Ascending aorta (tissue), 2 donors: ENCODE measurements at regions of chr6 and their contacts with region 1.

Region 1: DNA sequence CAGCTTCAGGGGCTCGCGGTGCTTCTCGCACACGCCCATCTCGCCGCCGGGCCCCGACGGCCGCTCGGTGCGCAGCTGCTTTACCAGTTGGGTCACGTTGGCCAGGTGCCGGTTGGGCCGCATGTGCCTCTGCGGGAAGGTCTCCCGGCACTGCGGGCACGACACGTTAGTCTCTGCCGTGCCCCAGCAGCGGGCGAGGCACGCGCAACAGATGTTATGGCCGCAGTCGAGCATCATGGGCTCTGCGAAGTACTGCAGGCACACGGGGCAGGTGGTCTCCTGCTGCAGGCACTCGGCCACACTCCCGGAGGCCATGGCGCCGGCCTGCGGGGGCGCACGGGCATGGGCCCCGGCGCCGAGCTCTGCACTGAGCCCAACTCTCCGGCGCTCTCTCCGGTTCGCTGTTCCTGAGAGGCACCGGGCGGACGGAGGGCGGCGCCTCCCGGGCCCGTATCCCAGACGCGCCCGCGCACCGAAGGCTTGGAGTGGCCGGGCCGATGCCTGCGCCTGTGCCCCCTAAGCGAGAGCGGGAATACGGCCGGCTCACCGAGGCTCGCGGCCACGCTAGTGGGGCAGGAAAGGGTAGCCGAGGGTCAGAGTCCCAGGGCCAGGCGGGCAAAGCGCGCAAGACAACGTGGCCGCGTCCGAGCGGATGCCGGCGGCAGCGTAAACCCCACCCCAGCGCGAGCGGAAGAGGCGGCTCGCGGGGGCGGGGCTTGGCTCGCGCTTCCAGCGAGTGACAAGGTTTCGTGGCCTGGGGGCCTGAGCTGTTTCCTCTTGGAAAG is at the start of gene TRIM27:
- DNase-seq: peak; percentile 50 to 91
- H3K4me3 ChIP-seq: peak within 1 kb of the TSS; percentile 82 to 97
- H3K27ac ChIP-seq: peak within 1 kb of the TSS; percentile 91 to 98
- H3K4me1 ChIP-seq: peaks cover 6 to 16% of the 10 kb centered on the region in 2 donors
- H3K27me3 ChIP-seq: no peaks in the 10 kb centered on the region
- CTCF ChIP-seq: peak in 1 of 3 experiments; percentile 23
- total RNA-seq, gene TRIM27: 167 TPM

Region 2: GRCh38 chr6:28758046-28758817 is 165.3 kb before region 1 on chr6:
- intact Hi-C with region 1: no loop called
- DNase-seq: no peak
- H3K4me3 ChIP-seq: no peak overlapping the region
- H3K27ac ChIP-seq: no peak overlapping the region
- H3K4me1 ChIP-seq: no peaks in the 10 kb centered on the region
- H3K27me3 ChIP-seq: no peaks in the 10 kb centered on the region
- CTCF ChIP-seq: no peak

Region 3: DNA sequence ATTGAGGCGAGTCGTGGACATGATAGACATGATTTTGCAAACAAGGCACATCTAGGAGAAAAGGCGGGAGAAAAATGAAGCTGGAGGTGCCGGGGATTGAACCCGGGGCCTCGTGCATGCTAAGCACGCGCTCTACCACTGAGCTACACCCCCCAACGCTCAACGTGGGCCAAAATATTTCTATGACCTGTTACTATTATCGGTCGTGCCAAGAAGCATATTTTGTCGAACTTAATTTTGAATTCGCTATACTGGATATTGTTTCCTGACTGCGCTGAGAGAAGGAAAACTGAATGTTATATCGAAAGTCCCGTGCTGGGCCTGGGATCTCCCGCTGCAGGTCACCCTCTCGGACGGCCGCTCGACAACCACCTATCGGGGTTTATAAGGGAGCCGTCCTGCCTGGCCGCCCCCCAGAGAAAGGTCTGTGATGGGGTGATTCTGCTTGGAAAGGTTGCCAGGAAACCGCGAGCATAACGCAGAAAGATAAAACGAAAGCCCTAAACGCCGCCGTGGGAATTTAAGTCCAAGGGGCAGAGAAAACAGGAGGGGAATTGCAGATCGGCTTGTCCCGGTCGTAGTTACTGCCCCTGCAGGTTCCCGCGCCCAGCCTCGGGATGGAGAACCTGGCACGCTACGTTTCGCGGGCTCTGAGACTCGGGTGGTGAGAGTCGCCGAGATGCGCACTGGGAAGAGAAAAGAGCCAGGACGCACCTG is 59.7 kb before region 1 on chr6:
- intact Hi-C with region 1: loop called (anchors 1 kb)
- DNase-seq: peak in 1 of 2 donors; percentile 86
- H3K4me3 ChIP-seq: peak overlapping the region; percentile 66 to 81
- H3K27ac ChIP-seq: peak overlapping the region; percentile 59 to 78
- H3K4me1 ChIP-seq: peaks cover 0 to 3% of the 10 kb centered on the region in 2 donors
- H3K27me3 ChIP-seq: no peaks in the 10 kb centered on the region
- CTCF ChIP-seq: no peak

Region 4: DNA sequence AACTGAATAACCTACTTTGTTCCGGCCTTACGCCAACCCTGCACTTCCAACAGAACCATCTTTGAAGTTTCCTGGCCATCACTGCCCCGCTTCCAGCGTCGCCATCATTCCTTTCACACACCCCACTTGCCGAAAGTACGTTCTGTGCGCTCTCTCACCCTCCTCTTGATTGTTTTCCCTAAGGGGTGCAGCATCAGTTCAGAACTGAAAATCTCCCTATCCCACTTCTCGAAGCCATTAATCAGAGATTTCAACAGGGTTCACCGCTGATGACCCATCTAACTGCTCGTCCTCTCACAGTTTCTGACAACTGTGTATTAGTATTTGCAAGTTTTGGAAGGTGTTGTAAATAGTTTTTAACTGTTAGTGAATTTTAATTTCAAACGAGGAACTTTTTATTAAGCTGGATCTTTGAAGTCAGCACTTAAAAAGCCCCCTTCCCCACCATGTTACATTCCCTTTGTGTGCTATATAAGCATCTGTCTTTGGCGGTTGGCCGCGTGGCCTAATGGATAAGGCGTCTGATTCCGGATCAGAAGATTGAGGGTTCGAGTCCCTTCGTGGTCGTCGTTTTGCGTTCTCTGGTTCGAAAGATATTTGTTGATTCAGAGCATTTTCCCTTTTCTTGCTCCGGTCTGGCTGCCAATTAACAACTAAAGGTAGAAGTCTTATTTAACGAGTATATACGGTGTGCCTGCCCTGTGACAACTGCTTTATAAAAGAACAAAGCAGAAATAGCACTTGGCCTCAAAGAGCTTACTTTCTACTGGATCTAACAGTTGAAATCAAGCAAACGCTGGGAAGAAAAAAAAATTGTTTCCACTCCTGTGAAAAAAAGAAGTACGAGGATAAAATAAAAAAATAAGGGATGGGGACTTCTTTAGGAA is 42.4 kb before region 1 on chr6:
- intact Hi-C with region 1: loop called (anchors 1 kb)
- DNase-seq: peak in 1 of 2 donors; percentile 86
- H3K4me3 ChIP-seq: peak overlapping the region; percentile 48 to 64
- H3K27ac ChIP-seq: no peak overlapping the region
- H3K4me1 ChIP-seq: no peaks in the 10 kb centered on the region
- H3K27me3 ChIP-seq: peaks cover 3% of the 10 kb centered on the region
- CTCF ChIP-seq: no peak

Region 5: GRCh38 chr6:28895134-28895812 is 28.2 kb before region 1 on chr6:
- intact Hi-C with region 1: loop called (anchors 1 kb)
- DNase-seq: peak; percentile 86 to 98
- H3K4me3 ChIP-seq: peak overlapping the region; percentile 60 to 72
- H3K27ac ChIP-seq: peak overlapping the region; percentile 95 to 96
- H3K4me1 ChIP-seq: no peaks in the 10 kb centered on the region
- H3K27me3 ChIP-seq: no peaks in the 10 kb centered on the region
- CTCF ChIP-seq: no peak

Region 6: DNA sequence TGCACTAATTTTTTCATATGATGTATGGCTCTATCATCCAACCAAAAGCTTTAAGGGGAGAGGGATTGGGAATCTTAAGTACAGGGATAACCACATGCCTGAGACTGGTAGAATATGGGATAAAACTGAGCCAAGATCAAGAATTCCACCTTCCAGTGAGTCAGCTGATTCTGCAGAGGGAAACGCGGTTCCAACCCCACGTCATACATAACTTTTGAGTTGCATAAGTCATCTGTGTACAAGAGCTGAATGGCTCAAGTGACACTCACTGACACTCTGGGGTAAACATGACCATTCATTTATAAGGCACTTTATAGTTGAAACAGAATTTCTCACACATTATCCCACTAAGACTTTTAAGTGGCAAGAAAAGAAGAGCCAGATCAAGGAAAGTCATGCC is 16.1 kb before region 1 on chr6:
- intact Hi-C with region 1: loop called (anchors 2 kb)
- DNase-seq: peak in 1 of 2 donors; percentile 80
- H3K4me3 ChIP-seq: no peak overlapping the region
- H3K27ac ChIP-seq: peak overlapping the region; percentile 0 to 51
- H3K4me1 ChIP-seq: peaks cover 0 to 6% of the 10 kb centered on the region in 2 donors
- H3K27me3 ChIP-seq: no peaks in the 10 kb centered on the region
- CTCF ChIP-seq: no peak

Region 7: DNA sequence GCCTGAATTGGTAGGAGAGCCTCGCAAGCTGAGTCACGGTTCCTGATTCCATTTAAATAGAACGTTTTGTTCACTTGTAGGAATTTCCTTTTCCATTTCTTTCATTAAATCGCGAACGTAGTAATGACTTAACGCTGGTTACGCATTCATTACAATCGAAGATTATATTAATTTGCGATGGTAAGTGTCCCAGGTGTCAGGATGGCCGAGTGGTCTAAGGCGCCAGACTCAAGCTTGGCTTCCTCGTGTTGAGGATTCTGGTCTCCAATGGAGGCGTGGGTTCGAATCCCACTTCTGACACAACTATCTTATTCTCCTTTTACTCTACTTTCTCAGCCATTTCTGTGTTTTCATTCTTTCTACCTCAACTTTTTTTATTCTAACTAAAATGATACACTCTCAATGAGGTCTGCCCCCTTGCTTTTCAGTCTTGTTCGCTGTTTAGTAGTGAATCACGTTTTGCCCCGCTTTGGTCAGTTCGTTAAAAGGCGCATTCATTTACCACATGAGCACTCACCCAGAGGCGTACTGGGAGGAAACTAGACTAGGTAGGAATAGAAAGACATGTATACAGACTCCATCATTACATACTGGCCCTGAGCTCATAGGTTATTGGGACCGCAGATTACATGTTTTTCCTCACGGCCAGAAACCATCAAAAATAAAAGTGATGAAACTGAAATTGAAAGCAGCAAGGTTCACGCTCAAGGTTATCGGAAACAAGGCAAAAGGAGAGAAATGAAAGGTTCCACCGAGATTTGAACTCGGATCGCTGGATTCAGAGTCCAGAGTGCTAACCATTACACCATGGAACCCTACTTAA is 17.6 kb after region 1 on chr6:
- intact Hi-C with region 1: loop called (anchors 1 kb)
- DNase-seq: peak; percentile 31 to 89
- H3K4me3 ChIP-seq: peak overlapping the region; percentile 77 to 81
- H3K27ac ChIP-seq: peak overlapping the region; percentile 89 to 91
- H3K4me1 ChIP-seq: no peaks in the 10 kb centered on the region
- H3K27me3 ChIP-seq: no peaks in the 10 kb centered on the region
- CTCF ChIP-seq: no peak

Region 8: DNA sequence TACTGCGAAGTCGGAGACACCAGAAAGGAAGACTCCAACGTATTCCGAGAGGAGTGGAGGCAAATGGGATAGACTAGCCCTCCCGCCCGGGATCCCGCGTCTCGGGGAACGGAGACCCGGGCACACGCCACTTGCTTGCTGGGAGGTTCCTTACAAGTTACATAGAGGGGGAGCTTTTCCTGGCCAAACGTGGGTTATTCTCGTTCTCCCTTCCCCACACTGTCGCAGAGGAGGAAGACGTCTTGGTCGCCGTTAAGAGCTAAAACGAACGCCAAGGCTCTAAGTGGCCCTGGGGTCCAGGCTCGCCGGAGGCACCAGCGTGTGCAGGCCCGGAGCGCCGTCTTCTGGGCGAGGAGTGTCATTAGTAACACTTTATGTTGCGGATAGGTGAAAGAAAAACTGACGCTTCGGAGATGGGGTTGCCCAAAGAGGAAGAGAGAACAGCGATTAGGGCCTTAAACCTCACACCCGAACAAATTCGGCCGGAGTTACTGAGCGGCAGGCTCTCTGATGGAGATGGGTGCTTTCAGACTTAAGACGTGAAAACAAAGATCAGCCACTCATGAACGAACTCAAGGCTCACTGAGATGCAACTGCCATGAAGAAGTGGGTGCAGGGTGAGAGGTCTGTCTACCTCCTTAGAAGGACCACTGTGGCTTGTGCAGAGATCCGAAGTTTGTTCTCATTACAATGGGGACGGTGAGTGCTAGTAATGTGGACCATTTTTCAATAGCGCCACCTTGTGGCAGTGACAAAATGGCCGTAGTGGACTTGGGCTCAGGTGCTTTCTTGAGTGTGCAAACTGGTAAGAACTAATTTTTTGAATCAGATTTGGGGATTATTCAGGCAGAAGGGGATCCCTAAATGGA is 93.3 kb after region 1 on chr6:
- intact Hi-C with region 1: loop called (anchors 5 kb)
- DNase-seq: peak in 1 of 2 donors; percentile 92
- H3K4me3 ChIP-seq: peak overlapping the region; percentile 47 to 71
- H3K27ac ChIP-seq: peak overlapping the region in 1 of 2 donors; percentile 67
- H3K4me1 ChIP-seq: peaks cover 0 to 2% of the 10 kb centered on the region in 2 donors
- H3K27me3 ChIP-seq: peaks cover 5% of the 10 kb centered on the region
- CTCF ChIP-seq: peak; percentile 53 to 65 (median 61)

Region 9: GRCh38 chr6:29183594-29183993 is 260.1 kb after region 1 on chr6:
- intact Hi-C with region 1: no loop called
- DNase-seq: no peak
- H3K4me3 ChIP-seq: no peak overlapping the region
- H3K27ac ChIP-seq: no peak overlapping the region
- H3K4me1 ChIP-seq: no peaks in the 10 kb centered on the region
- H3K27me3 ChIP-seq: no peaks in the 10 kb centered on the region
- CTCF ChIP-seq: no peak